Esophagus muscularis mucosa (tissue), 4 donors: ENCODE measurements at regions of chr4 and their contacts with region 1.

Region 1: DNA sequence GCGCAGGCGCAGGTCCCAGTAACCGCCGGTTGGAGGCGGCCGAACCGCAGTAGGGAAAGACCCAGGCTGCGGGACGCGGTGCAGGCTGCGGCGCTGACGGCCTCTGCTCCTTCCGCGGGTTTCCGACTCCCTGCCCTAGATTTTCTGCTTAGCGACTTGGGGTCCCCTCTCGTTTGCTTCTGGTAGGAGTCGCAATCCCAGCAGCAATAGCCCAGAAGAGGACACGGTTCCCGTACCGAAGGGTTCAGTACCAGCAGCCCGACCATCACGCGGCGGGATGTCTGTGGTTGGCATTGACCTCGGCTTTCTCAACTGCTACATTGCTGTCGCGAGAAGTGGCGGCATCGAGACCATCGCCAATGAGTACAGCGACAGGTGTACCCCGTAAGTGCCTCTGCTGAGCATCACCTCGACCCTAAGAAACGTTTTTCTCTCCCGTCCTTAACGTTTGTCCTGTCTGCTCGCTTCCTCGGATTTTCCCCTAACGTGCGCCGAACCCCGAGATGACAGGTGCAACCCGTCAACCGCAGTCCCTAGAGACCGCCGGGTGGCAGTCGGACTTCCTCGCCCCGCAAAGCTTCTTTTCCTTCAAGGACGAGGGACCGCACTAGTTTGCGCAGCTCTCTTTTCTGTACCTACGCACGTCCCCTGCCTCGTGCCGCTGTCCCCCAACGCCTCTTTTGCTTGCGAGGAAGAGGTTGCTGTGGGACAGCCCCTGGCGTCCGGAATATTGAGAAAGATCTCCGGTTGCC is at the start of gene HSPA4L:
- DNase-seq: peak; percentile 93
- H3K4me3 ChIP-seq: peak within 1 kb of the TSS; percentile 72 to 83 (median 77)
- H3K27ac ChIP-seq: peak within 1 kb of the TSS; percentile 81 to 87 (median 86)
- H3K4me1 ChIP-seq: peaks cover 0 to 24% (median 14%) of the 10 kb centered on the region in 4 donors
- H3K27me3 ChIP-seq: no peaks in the 10 kb centered on the region
- CTCF ChIP-seq: peak in 2 of 3 experiments; percentile 31 to 44
- EP300 ChIP-seq: no peak
- POLR2A ChIP-seq: peak; percentile 11
- total RNA-seq, gene HSPA4L: 5.0 to 8.7 (median 6.8) TPM

Region 2: GRCh38 chr4:127632420-127633403 is 149.7 kb before region 1 on chr4 and contains the start of gene INTU:
- intact Hi-C with region 1: loop called (anchors 5 kb)
- DNase-seq: peak; percentile 98
- H3K4me3 ChIP-seq: peak within 1 kb of the TSS; percentile 64 to 77 (median 72)
- H3K27ac ChIP-seq: peak within 1 kb of the TSS; percentile 44 to 82 (median 68)
- H3K4me1 ChIP-seq: peaks cover 3 to 26% (median 12%) of the 10 kb centered on the region in 4 donors
- H3K27me3 ChIP-seq: no peaks in the 10 kb centered on the region
- CTCF ChIP-seq: no peak
- EP300 ChIP-seq: no peak
- POLR2A ChIP-seq: no peak
- total RNA-seq, gene INTU: 5.9 to 8.7 (median 7.1) TPM

Region 3: GRCh38 chr4:127870688-127871087 is 88.2 kb after region 1 on chr4:
- intact Hi-C with region 1: loop called (anchors 10 kb)
- DNase-seq: no peak
- H3K4me3 ChIP-seq: no peak overlapping the region
- H3K27ac ChIP-seq: peak overlapping the region in 1 of 4 donors; percentile 26
- H3K4me1 ChIP-seq: peaks cover 7 to 14% (median 11%) of the 10 kb centered on the region in 4 donors
- H3K27me3 ChIP-seq: no peaks in the 10 kb centered on the region
- CTCF ChIP-seq: no peak
- EP300 ChIP-seq: no peak
- POLR2A ChIP-seq: no peak

Region 4: DNA sequence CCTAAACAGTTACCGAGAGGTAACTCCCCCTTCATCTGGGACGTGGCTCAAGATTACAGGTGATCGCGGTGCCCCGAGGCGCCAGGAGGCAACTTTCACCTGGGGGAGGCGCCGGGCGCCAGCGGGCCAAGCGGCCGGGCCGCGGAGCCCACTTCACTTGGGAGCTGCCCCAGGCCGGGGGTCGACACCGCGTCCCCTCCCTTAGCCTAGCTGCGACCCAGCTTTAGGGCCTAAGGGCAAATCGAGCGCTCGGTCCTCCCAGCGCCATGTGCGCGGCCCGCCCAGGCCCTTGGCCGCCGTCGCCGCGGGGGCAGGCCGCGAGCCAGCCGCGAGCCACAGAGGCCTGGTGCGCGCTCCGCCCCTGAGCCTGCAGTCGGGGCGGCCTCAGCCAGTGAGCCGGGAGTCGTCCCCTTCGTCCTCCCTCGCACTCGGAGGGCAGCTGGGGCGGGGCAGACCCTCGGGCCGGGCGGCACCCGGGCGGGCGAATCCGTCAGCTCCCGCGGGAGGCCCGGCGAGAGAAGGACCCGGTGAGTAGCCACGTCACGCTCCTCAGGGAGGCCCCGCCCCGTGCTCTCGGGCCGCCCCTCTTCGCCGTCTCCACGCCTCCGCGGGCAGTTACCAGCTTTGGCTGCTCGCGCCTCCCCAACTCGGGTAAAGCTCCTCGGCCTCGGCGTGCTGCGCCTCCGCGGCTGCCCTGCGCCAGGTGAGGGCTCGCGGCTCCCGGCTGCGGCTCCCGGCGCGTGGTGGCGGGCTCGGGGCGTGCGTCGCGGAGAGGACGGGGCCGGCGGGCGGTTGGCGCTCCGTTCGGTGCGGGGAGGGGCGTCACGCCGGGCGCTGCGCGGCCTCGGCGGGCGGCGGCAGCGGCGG is 278.5 kb after region 1 on chr4 and contains the start of gene LARP1B:
- intact Hi-C with region 1: loop called (anchors 10 kb)
- DNase-seq: peak; percentile 97
- H3K4me3 ChIP-seq: peak within 1 kb of the TSS; percentile 86 to 97 (median 91)
- H3K27ac ChIP-seq: peak within 1 kb of the TSS; percentile 96 to 98 (median 98)
- H3K4me1 ChIP-seq: peaks cover 9 to 19% (median 13%) of the 10 kb centered on the region in 4 donors
- H3K27me3 ChIP-seq: no peaks in the 10 kb centered on the region
- CTCF ChIP-seq: no peak
- EP300 ChIP-seq: no peak
- POLR2A ChIP-seq: peak; percentile 59
- total RNA-seq, gene LARP1B: 18.9 to 27.5 (median 24.1) TPM